ENCODE measurements at regions of chr9 and their contacts with region 1.

Region 1: GRCh38 chr9:89815903-89816573 is 211.2 kb downstream of the GADD45G start:
- DNase-seq: peak; percentile 69
- ATAC-seq: peak; percentile 97
- H3K4me3 ChIP-seq: no peak overlapping the region
- H3K27ac ChIP-seq: peak overlapping the region; percentile 74
- H3K4me1 ChIP-seq: peaks cover 23% of the 10 kb centered on the region
- H3K27me3 ChIP-seq: no peaks in the 10 kb centered on the region; a peak in 1 of 4 replicates
- CTCF ChIP-seq: no peak
- EP300 ChIP-seq: peak; percentile 40 to 70; a peak in 2 of 4 replicates
- POLR2A ChIP-seq: peak; percentile 60
- RAD21 ChIP-seq: no peak

Region 2: GRCh38 chr9:89701221-89701798 is 114.7 kb before region 1 on chr9:
- CTCF ChIA-PET with region 1: interaction called, 4 read pairs
- POLR2A ChIA-PET with region 1: interaction called, 9 read pairs
- RAD21 ChIA-PET with region 1: interaction called, 41 read pairs
- SMC1A ChIA-PET with region 1: interaction called, 22 read pairs
- in situ Hi-C with region 1: no loop called
- intact Hi-C with region 1: loop called (anchors 5 kb)
- DNase-seq: peak; percentile 73
- ATAC-seq: peak; percentile 95
- H3K4me3 ChIP-seq: peak overlapping the region; percentile 41
- H3K27ac ChIP-seq: peak overlapping the region; percentile 83
- H3K4me1 ChIP-seq: peaks cover 20% of the 10 kb centered on the region
- H3K27me3 ChIP-seq: no peaks in the 10 kb centered on the region
- CTCF ChIP-seq: no peak
- EP300 ChIP-seq: peak; percentile 27 to 91; a peak in 2 of 4 replicates
- POLR2A ChIP-seq: peak; percentile 86
- RAD21 ChIP-seq: no peak

Region 3: GRCh38 chr9:89743573-89744361 is 72.3 kb before region 1 on chr9:
- CTCF ChIA-PET with region 1: interaction called, 3 read pairs
- POLR2A ChIA-PET with region 1: interaction called, 3 read pairs
- RAD21 ChIA-PET with region 1: interaction called, 17 read pairs
- SMC1A ChIA-PET with region 1: interaction called, 19 read pairs
- in situ Hi-C with region 1: no loop called
- intact Hi-C with region 1: no loop called
- DNase-seq: peak; percentile 71
- ATAC-seq: peak; percentile 73
- H3K4me3 ChIP-seq: no peak overlapping the region
- H3K27ac ChIP-seq: peak overlapping the region; percentile 58
- H3K4me1 ChIP-seq: peaks cover 48% of the 10 kb centered on the region
- H3K27me3 ChIP-seq: no peaks in the 10 kb centered on the region; a peak in 1 of 4 replicates
- CTCF ChIP-seq: 0 out of 6 replicates have a peak, but pooled peaks of 2 of the 3 experiments have one; percentile 11 to 12
- EP300 ChIP-seq: 0 out of 4 replicates have a peak, but pooled peaks of 1 of the 2 experiments have one; percentile 10
- POLR2A ChIP-seq: no peak
- RAD21 ChIP-seq: 0 out of 2 replicates have a peak, but pooled peaks have one; percentile 2

Region 4: GRCh38 chr9:89781838-89782517 is 34.1 kb before region 1 on chr9:
- CTCF ChIA-PET with region 1: no interaction called
- POLR2A ChIA-PET with region 1: no interaction called
- RAD21 ChIA-PET with region 1: interaction called, 3 read pairs
- SMC1A ChIA-PET with region 1: interaction called, 12 read pairs
- in situ Hi-C with region 1: no loop called
- intact Hi-C with region 1: no loop called
- DNase-seq: peak; percentile 72
- ATAC-seq: peak; percentile 96
- H3K4me3 ChIP-seq: no peak overlapping the region
- H3K27ac ChIP-seq: no peak overlapping the region
- H3K4me1 ChIP-seq: no peaks in the 10 kb centered on the region; the same call in 1 of the 2 replicates
- H3K27me3 ChIP-seq: no peaks in the 10 kb centered on the region
- CTCF ChIP-seq: no peak
- EP300 ChIP-seq: no peak
- POLR2A ChIP-seq: no peak
- RAD21 ChIP-seq: no peak

Region 5: DNA sequence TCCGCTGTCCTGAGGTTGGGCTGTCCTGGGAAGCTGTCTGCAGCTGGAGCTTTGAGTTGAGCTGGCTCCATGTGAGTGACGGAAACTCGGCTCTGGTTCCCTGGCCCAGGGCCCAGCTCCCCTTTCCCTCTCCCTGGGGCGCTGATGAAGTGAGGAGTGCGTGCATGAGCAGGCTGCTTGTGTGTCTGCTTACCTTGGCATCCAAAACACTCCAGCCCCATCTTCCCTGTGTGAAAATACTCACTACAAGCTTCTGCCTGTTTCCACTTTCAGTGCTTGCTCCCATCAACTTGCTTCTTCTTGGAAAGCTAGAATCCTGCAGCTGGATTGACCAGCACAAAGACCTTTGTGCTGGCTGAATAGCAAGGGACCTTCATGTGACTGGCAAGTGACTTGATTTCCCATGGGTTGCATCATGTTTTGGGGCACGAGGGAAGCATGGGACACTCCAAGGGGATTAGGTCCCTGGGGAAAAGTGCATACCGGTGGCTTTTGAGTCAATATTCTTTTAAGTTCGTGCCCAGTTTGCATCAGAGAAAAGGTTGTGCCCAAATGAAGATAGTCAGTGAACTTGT is 13.2 kb before region 1 on chr9:
- CTCF ChIA-PET with region 1: interaction called, 5 read pairs
- POLR2A ChIA-PET with region 1: interaction called, 4 read pairs
- RAD21 ChIA-PET with region 1: interaction called, 3 read pairs
- SMC1A ChIA-PET with region 1: interaction called, 14 read pairs
- in situ Hi-C with region 1: no loop called
- intact Hi-C with region 1: no loop called
- DNase-seq: no peak
- ATAC-seq: no peak
- H3K4me3 ChIP-seq: no peak overlapping the region
- H3K27ac ChIP-seq: no peak overlapping the region
- H3K4me1 ChIP-seq: no peaks in the 10 kb centered on the region
- H3K27me3 ChIP-seq: no peaks in the 10 kb centered on the region
- CTCF ChIP-seq: no peak
- EP300 ChIP-seq: no peak
- POLR2A ChIP-seq: no peak
- RAD21 ChIP-seq: no peak

Region 6: GRCh38 chr9:89835666-89836065 is 19.6 kb after region 1 on chr9:
- CTCF ChIA-PET with region 1: interaction called, 5 read pairs
- POLR2A ChIA-PET with region 1: interaction called, 3 read pairs
- RAD21 ChIA-PET with region 1: interaction called, 3 read pairs
- SMC1A ChIA-PET with region 1: interaction called, 12 read pairs
- in situ Hi-C with region 1: no loop called
- intact Hi-C with region 1: no loop called
- DNase-seq: no peak
- ATAC-seq: no peak
- H3K4me3 ChIP-seq: no peak overlapping the region
- H3K27ac ChIP-seq: no peak overlapping the region
- H3K4me1 ChIP-seq: no peaks in the 10 kb centered on the region
- H3K27me3 ChIP-seq: no peaks in the 10 kb centered on the region; a peak in 1 of 4 replicates
- CTCF ChIP-seq: no peak
- EP300 ChIP-seq: no peak
- POLR2A ChIP-seq: no peak
- RAD21 ChIP-seq: no peak

Region 7: DNA sequence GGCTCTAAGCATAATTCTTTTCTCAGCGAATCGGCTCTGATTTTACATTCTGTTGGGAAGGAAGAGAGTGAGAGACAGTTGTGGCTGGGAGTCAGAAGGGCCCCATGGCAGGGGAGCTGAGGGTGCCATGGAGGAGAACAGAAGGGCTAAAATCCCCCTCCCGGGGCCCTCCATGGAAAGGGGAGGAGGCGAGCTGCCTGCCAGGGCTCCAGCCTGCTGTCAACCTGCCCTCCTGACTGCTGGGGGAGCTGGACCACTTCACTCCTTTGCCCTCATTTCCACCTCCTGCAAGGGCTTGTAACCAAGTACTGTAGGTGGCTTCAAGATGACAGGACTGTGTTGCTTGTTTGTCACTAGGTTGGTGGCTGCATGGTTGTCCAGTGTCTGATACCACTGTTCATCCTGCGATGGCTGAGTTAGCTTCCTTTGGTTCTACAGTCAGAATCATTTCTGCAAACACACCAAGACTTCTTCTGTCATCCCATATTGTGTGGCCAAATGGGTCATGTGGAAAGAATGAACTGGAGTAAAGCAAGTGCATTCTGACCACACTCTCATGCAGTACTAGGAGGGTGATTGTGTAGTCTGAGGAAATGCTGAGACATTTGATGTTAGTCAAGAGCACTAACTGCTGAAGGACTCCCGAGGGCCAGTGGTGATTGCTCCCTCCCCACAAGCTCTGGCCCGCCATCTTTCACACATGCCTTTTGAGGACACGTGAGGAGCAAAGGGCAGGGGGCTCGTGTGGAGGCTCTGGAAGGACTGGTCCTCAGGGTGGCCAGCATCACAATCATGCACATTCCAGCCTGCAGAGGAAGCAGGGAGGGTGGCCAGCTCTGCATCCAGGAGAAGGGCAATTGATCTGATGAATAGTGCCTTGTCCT is 95.9 kb after region 1 on chr9:
- CTCF ChIA-PET with region 1: no interaction called
- POLR2A ChIA-PET with region 1: no interaction called
- RAD21 ChIA-PET with region 1: no interaction called
- SMC1A ChIA-PET with region 1: no interaction called
- in situ Hi-C with region 1: no loop called
- intact Hi-C with region 1: no loop called
- DNase-seq: no peak
- ATAC-seq: no peak
- H3K4me3 ChIP-seq: no peak overlapping the region
- H3K27ac ChIP-seq: no peak overlapping the region
- H3K4me1 ChIP-seq: no peaks in the 10 kb centered on the region
- H3K27me3 ChIP-seq: no peaks in the 10 kb centered on the region; a peak in 2 of 4 replicates
- CTCF ChIP-seq: no peak
- EP300 ChIP-seq: no peak
- POLR2A ChIP-seq: no peak
- RAD21 ChIP-seq: peak; percentile 16; the same call in 1 of the 2 replicates

Region 8: DNA sequence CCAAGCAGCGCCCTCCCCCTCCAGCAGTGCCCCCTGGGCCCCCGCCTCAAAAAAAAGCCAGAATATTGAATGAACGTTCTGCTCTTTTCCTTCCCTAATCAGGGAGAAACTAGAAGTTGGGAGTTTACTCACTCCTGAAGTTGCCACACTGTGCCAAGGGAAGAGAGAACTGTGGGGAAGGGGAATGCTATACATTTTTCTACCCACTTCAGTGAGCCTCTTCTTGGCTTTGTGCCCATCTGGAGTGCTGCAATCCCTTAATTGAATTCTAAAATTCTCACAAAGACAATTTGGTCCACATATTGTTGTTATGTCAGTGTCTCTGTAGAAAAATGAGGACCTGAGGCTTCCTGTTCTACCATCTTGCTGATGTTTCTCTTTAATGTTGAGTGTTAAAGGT is 382.9 kb after region 1 on chr9:
- CTCF ChIA-PET with region 1: no interaction called
- POLR2A ChIA-PET with region 1: no interaction called
- RAD21 ChIA-PET with region 1: no interaction called
- SMC1A ChIA-PET with region 1: no interaction called
- in situ Hi-C with region 1: no loop called
- intact Hi-C with region 1: no loop called
- DNase-seq: no peak
- ATAC-seq: no peak
- H3K4me3 ChIP-seq: no peak overlapping the region
- H3K27ac ChIP-seq: no peak overlapping the region
- H3K4me1 ChIP-seq: no peaks in the 10 kb centered on the region
- H3K27me3 ChIP-seq: no peaks in the 10 kb centered on the region
- CTCF ChIP-seq: no peak
- EP300 ChIP-seq: no peak
- POLR2A ChIP-seq: no peak
- RAD21 ChIP-seq: no peak